ENCODE measurements at regions of chr7 and their contacts with region 1.

Region 1: GRCh38 chr7:85669225-85669624 is 482.4 kb upstream of the SEMA3D start:
- DNase-seq: no peak
- ATAC-seq: no peak
- H3K4me3 Mint-ChIP-seq: no peak overlapping the region
- H3K27ac Mint-ChIP-seq: no peak overlapping the region
- H3K4me1 Mint-ChIP-seq: no peaks in the 10 kb centered on the region
- H3K27me3 Mint-ChIP-seq: no peaks in the 10 kb centered on the region
- CTCF ChIP-seq: no peak

Region 2: GRCh38 chr7:85620936-85621685 is 48.1 kb before region 1 on chr7:
- CTCF ChIA-PET with region 1: no interaction called
- POLR2A ChIA-PET with region 1: no interaction called
- intact Hi-C with region 1: no loop called
- DNase-seq: no peak
- ATAC-seq: no peak
- H3K4me3 Mint-ChIP-seq: no peak overlapping the region
- H3K27ac Mint-ChIP-seq: no peak overlapping the region
- H3K4me1 Mint-ChIP-seq: no peaks in the 10 kb centered on the region
- H3K27me3 Mint-ChIP-seq: no peaks in the 10 kb centered on the region
- CTCF ChIP-seq: no peak

Region 3: DNA sequence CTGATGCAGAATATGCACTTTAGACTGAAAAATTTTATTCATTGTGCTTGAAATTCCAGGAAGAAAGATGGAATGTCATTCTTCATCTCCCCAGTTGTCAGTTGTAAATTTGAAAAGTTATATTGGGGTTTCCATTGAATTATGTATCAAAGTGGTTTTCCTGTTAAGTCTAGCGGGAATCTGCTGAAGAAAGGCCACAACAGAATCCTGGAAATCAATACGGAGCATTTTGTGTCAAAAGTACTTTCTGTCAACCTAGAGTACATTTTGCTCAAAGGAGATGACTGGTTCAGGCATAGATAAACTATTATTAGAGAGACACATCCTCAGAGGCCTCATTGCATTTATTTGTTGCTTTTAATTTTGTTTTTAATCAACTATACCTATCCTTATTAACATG is 55.8 kb after region 1 on chr7:
- CTCF ChIA-PET with region 1: no interaction called
- POLR2A ChIA-PET with region 1: no interaction called
- intact Hi-C with region 1: loop called (anchors 2 kb)
- DNase-seq: no peak
- ATAC-seq: no peak
- H3K4me3 Mint-ChIP-seq: no peak overlapping the region
- H3K27ac Mint-ChIP-seq: no peak overlapping the region
- H3K4me1 Mint-ChIP-seq: no peaks in the 10 kb centered on the region
- H3K27me3 Mint-ChIP-seq: no peaks in the 10 kb centered on the region
- CTCF ChIP-seq: no peak

Measured in activated B cell treated with CpG ODN at 0.5 μM for 24 hours (primary cell).